ENCODE measurements at regions of chr20 and their contacts with region 1.

Region 1: GRCh38 chr20:20593447-20594170 is 118.8 kb downstream of the RALGAPA2 start:
- DNase-seq: peak; percentile 65
- ATAC-seq: peak; percentile 86
- H3K4me3 ChIP-seq: no peak overlapping the region
- H3K27ac ChIP-seq: no peak overlapping the region
- H3K4me1 ChIP-seq: peaks cover 4% of the 10 kb centered on the region
- H3K27me3 ChIP-seq: no peaks in the 10 kb centered on the region
- CTCF ChIP-seq: peak; percentile 56
- POLR2A ChIP-seq: no peak
- RAD21 ChIP-seq: peak; percentile 40

Region 2: GRCh38 chr20:20360464-20360863 is 233.1 kb before region 1 on chr20:
- CTCF ChIA-PET with region 1: interaction called, 6 read pairs
- POLR2A ChIA-PET with region 1: no interaction called
- dilution Hi-C with region 1: no loop called
- in situ Hi-C with region 1: no loop called
- intact Hi-C with region 1: loop called (anchors 1 kb)
- DNase-seq: peak; percentile 69
- ATAC-seq: peak; percentile 98
- H3K4me3 ChIP-seq: no peak overlapping the region
- H3K27ac ChIP-seq: no peak overlapping the region
- H3K4me1 ChIP-seq: no peaks in the 10 kb centered on the region
- H3K27me3 ChIP-seq: peaks cover 47% of the 10 kb centered on the region
- CTCF ChIP-seq: peak; percentile 92
- POLR2A ChIP-seq: no peak
- RAD21 ChIP-seq: peak; percentile 86

Region 3: DNA sequence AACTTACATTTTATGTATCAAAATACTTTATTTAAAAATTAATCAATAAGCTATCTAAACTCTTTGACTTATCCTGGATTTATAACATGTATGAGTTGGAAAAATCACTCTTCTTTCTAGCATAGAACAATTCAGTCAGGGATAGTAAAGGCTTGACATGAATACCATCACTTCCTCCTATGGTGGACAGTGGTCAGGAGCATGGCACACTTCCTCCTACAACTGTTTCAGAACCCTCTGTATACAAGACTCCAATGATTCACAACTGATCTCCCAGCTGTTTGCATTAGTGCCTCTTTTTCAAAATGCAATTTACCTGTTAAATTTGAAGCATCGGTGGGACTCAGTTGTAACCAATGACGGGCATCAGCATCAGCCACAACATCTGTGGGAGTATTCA is 10.9 kb before region 1 on chr20:
- CTCF ChIA-PET with region 1: interaction called, 39 read pairs
- POLR2A ChIA-PET with region 1: no interaction called
- dilution Hi-C with region 1: no loop called
- in situ Hi-C with region 1: no loop called
- intact Hi-C with region 1: no loop called
- DNase-seq: no peak
- ATAC-seq: no peak
- H3K4me3 ChIP-seq: no peak overlapping the region
- H3K27ac ChIP-seq: no peak overlapping the region
- H3K4me1 ChIP-seq: no peaks in the 10 kb centered on the region
- H3K27me3 ChIP-seq: no peaks in the 10 kb centered on the region
- CTCF ChIP-seq: no peak
- POLR2A ChIP-seq: no peak
- RAD21 ChIP-seq: no peak

Region 4: DNA sequence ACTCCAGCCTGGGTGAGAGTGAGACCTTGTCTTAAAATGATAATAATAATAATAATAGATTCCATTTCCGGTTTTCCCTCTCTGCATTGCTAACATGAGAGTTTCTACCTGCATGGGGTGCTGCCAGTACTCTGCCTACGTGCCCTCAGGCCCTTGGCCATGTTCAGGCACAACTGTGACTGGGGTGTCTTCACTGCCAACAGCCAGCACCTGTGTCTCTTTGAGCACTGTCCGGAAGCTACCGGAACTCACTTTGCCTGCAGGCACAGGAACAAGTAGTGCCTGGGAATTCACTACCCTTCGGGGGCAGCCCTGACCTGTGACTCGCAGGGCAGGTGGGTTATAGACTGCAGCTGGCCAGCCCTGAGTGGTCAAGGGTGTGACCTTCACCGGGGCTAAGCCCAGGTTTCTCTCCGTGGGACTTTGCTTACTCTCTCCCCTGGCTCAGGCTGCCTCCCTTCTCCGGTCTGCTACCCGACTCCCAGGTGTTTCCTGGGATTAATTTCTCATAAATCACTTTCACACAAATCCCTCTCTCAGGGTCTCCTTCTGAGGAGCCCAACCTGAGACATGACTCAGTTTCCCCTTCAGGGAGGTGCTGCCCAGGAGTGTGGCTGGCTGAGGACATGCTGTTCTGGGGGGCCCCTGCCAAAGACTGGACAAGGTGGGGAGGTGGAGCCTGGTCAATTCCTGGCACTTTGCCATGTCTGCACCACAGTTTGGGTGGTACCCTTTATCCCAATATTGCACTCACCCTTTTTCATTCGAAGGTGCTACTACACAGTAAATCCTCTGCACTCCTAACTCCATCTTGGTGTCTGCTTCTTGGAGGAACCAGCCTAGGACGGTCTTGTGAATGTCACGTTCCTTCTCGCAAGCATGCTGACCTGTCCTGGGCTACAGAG is 198.3 kb after region 1 on chr20:
- CTCF ChIA-PET with region 1: no interaction called
- POLR2A ChIA-PET with region 1: no interaction called
- dilution Hi-C with region 1: no loop called
- in situ Hi-C with region 1: no loop called
- intact Hi-C with region 1: no loop called
- DNase-seq: no peak
- ATAC-seq: no peak
- H3K4me3 ChIP-seq: no peak overlapping the region
- H3K27ac ChIP-seq: no peak overlapping the region
- H3K4me1 ChIP-seq: no peaks in the 10 kb centered on the region
- H3K27me3 ChIP-seq: no peaks in the 10 kb centered on the region
- CTCF ChIP-seq: no peak
- POLR2A ChIP-seq: no peak
- RAD21 ChIP-seq: no peak

Measured in IMR-90 (cell line).